Sigmoid colon (tissue), 7 donors: ENCODE measurements at regions of chr12 and their contacts with region 1.

Region 1: GRCh38 chr12:113221181-113221997 is at the start of gene TPCN1:
- DNase-seq: peak; percentile 100
- H3K4me3 ChIP-seq: peak within 1 kb of the TSS; percentile 77 to 97 (median 94)
- H3K27ac ChIP-seq: peak within 1 kb of the TSS; percentile 93 to 98 (median 96)
- H3K4me1 ChIP-seq: peaks cover 0 to 38% (median 30%) of the 10 kb centered on the region in 4 donors
- H3K27me3 ChIP-seq: no peaks in the 10 kb centered on the region
- CTCF ChIP-seq: no peak
- EP300 ChIP-seq: no peak
- POLR2A ChIP-seq: peak; percentile 82 to 89
- total RNA-seq, gene TPCN1: 25.7 to 51.5 (median 28.9) TPM

Region 2: DNA sequence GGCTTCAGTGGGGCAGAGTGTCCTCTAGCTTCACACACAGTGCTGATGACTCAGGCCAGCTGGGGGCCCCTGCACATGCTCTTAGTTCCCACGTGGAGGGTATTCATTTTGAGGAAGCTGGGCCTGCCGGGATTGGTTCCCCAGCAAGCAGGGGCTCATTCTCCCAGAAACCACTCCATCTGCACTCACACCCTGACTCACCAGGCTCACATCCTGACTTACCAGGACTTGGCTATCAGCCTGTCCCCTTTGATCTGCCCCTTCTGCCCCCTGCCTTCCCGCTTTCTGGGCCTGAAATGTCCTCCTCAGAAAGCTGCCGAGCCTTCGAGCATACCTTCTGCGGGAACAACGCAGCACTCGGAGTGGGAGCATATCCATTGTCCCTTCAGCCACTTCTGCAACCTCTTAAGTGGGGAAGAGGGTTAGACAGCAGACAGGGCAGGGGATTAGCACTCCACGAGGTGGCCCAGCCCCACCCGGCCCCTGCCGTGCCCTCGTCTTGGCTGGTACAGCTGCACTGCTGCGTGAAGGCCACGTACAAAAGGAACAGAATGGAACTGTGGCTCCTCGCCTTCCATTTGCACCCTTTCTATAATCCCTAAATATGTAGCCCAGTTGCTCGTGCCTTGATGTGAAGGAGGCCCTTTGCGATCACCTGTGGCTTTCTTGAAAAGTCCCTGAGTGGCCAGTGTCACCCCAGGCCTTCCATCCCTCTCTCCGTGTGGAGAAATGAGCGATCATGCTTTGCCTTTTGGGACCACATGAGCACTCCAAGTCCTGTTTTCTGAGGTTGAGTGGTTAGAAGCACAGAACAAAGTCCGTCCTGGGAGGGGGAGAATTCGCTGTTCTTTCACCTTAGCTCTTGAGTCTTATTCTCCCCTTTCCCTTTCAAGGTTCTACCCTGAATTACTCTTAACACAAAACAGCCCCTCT is 26.0 kb after region 1 on chr12:
- intact Hi-C with region 1: loop called (anchors 2 kb)
- DNase-seq: no peak
- H3K4me3 ChIP-seq: no peak overlapping the region
- H3K27ac ChIP-seq: peak overlapping the region; percentile 71 to 86 (median 82)
- H3K4me1 ChIP-seq: peaks cover 6 to 46% (median 41%) of the 10 kb centered on the region in 4 donors
- H3K27me3 ChIP-seq: no peaks in the 10 kb centered on the region
- CTCF ChIP-seq: no peak
- EP300 ChIP-seq: no peak
- POLR2A ChIP-seq: no peak

Region 3: DNA sequence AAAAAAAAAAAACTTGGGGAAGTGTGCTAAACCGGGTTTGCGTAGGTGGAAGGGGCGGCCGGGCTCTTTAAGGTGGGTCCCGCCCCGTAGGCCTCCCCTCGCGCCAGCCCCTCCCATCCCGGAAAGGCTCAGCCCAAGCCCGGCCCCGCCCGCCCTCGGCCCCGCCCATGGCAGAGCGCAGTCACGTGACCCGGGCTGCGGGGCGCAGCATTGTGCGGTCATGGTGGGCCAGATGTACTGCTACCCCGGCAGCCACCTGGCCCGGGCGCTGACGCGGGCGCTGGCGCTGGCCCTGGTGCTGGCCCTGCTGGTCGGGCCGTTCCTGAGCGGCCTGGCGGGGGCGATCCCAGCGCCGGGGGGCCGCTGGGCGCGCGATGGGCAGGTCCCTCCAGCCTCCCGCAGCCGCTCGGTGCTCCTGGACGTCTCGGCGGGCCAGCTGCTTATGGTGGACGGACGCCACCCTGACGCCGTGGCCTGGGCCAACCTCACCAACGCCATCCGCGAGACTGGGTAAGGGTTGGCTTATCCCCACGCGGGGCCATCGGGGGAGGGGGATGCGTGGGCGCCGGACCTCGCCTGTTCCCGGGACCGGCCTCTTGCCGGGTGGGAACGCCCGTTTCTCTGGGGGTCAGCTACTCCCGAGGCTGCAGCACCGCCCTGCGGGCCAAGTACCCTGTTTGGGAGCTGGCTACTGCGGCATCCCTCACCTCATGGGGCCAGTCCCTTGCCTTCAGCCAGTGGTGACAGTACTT is 137.2 kb after region 1 on chr12 and contains the start of gene PLBD2:
- intact Hi-C with region 1: loop called (anchors 1 kb)
- DNase-seq: peak; percentile 97
- H3K4me3 ChIP-seq: peak within 1 kb of the TSS; percentile 47 to 90 (median 86)
- H3K27ac ChIP-seq: peak within 1 kb of the TSS; percentile 85 to 91 (median 88)
- H3K4me1 ChIP-seq: peaks cover 0 to 21% (median 14%) of the 10 kb centered on the region in 4 donors
- H3K27me3 ChIP-seq: no peaks in the 10 kb centered on the region
- CTCF ChIP-seq: no peak
- EP300 ChIP-seq: no peak
- POLR2A ChIP-seq: no peak
- total RNA-seq, gene PLBD2: 13.2 to 39.1 (median 16.4) TPM